ENCODE measurements at regions of chr2 and their contacts with region 1.

Region 1: DNA sequence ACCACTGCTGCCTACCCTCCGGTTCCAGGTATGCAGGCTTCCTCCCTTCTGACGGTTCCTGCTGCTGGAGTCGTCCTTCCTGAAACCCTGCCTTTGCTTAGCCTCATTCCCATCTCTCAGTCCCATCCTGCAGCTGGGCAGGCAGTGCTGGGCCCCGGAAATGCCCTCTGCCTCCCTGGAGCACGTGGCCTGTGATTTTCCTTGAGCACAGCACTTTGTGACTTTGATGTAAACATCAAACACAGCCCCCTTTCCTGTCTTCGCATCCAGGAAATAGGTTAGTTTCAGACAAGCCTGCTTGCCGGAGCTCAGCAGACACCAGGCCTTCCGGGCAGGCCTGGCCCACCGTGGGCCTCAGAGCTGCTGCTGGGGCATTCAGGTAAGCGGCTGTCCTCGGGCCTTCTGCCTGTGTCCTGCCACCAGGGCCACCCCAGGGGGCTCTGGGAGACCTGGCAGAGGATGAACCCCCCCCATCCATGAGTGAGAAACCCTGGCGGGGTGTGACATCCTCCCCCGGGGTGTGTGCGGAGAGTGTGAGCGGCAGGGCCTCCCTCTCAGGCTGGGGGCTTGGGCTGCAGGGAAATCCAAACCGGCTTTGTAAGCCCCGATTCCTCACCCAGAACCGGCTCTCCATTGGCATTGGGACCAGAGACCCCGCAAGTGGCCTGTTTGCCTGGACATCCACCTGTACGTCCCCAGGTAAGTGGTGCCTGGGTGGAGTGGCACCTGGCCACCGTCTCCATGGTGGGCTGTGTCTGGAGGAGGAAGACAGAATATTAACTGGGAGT is at the start of gene ZAP70:
- DNase-seq: peak in 2 of 5 donors; percentile 23 to 63
- ATAC-seq: no peak
- H3K4me3 ChIP-seq: peak within 1 kb of the TSS in 1 of 12 donors; percentile 52
- H3K27ac ChIP-seq: peak within 1 kb of the TSS in 1 of 12 donors; percentile 79
- H3K4me1 ChIP-seq: peaks cover 0 to 9% (median 0%) of the 10 kb centered on the region in 12 donors
- H3K27me3 ChIP-seq: no peaks in the 10 kb centered on the region
- CTCF ChIP-seq: no peak
- POLR2A ChIP-seq: no peak
- total RNA-seq, gene ZAP70: 0.16 to 13.5 (median 0.87) TPM in 8 of 9 donors, not detected in the other

Region 2: GRCh38 chr2:97678298-97678697 is 35.2 kb before region 1 on chr2:
- intact Hi-C with region 1: no loop called
- DNase-seq: no peak
- ATAC-seq: no peak
- H3K4me3 ChIP-seq: no peak overlapping the region
- H3K27ac ChIP-seq: no peak overlapping the region
- H3K4me1 ChIP-seq: no peaks in the 10 kb centered on the region
- H3K27me3 ChIP-seq: peaks cover 0 to 2% (median 0%) of the 10 kb centered on the region in 9 donors
- CTCF ChIP-seq: no peak
- POLR2A ChIP-seq: no peak

Region 3: GRCh38 chr2:97740590-97741182 is 27.2 kb after region 1 on chr2:
- intact Hi-C with region 1: loop called in 3 of 10 experiments (anchors 5 kb)
- DNase-seq: peak in 2 of 5 donors; percentile 31 to 45
- ATAC-seq: peak in 1 of 4 donors; percentile 28
- H3K4me3 ChIP-seq: no peak overlapping the region
- H3K27ac ChIP-seq: no peak overlapping the region
- H3K4me1 ChIP-seq: peaks cover 0 to 26% (median 6%) of the 10 kb centered on the region in 12 donors
- H3K27me3 ChIP-seq: no peaks in the 10 kb centered on the region
- CTCF ChIP-seq: peak; percentile 48 to 69 (median 61)
- POLR2A ChIP-seq: peak in 1 of 2 donors; percentile 13

Region 4: GRCh38 chr2:98385050-98385699 is 671.7 kb after region 1 on chr2:
- intact Hi-C with region 1: loop called in 5 of 10 experiments (anchors 5 to 10 kb)
- DNase-seq: peak; percentile 55 to 82 (median 70)
- ATAC-seq: peak; percentile 60 to 90 (median 84)
- H3K4me3 ChIP-seq: no peak overlapping the region
- H3K27ac ChIP-seq: no peak overlapping the region
- H3K4me1 ChIP-seq: peaks cover 0 to 2% (median 0%) of the 10 kb centered on the region in 12 donors
- H3K27me3 ChIP-seq: no peaks in the 10 kb centered on the region
- CTCF ChIP-seq: peak; percentile 79 to 96 (median 90)
- POLR2A ChIP-seq: no peak

Region 5: DNA sequence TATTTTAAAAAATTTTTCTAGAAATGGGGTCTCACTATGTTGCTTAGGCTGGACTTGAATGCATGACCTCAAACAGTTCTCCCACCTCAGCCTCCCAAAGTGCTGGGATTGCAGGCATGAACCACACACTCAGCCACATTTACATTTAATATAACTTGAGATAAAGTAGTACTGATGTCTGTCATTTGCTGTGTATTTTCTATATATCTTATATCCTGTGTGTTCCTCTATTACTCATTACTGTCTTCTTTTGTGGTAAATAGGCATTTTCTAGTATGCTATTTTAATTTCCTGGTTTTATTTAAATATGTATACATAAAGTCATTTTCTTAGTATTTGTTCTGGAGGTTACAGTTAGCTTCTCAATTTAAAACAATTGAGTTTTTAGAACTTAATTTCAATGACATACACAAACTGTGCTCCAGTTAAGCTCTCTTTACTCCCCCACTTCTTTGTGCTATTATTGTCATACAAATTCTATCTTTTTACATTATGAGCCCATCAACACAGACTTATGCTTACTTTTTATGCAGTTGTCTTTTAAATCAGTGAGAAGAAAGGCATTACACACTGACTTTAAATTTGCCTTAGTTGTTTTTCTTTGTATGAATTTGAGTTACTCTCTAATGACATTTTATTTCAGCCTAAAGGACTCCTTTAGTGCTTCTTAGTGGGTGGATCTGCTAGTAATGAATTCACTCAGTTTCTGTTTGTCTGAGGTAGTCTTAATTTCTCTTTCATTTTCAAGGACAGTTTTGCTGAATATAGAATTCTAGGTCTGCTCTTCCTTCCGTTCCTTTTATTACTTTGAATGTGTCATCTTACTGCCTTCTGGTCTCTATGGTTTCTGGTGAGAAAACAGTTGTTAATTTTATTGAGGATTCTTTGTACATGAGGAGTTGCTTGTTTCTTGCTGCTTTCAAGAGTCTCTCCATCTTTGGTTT is 725.0 kb after region 1 on chr2:
- intact Hi-C with region 1: no loop called
- DNase-seq: no peak
- ATAC-seq: no peak
- H3K4me3 ChIP-seq: no peak overlapping the region
- H3K27ac ChIP-seq: peak overlapping the region in 1 of 12 donors; percentile 66
- H3K4me1 ChIP-seq: peaks cover 0 to 14% (median 0%) of the 10 kb centered on the region in 12 donors
- H3K27me3 ChIP-seq: no peaks in the 10 kb centered on the region
- CTCF ChIP-seq: no peak
- POLR2A ChIP-seq: no peak